CD4-positive, alpha-beta memory T cell (primary cell): ENCODE measurements at regions of chr22 and their contacts with region 1.

Region 1: GRCh38 chr22:36227386-36227785 is 11.9 kb downstream of the APOL2 start:
- DNase-seq: no peak
- H3K4me3 ChIP-seq: no peak overlapping the region
- H3K4me3 Mint-ChIP-seq: no peak overlapping the region
- H3K27ac ChIP-seq: no peak overlapping the region
- H3K27ac Mint-ChIP-seq: peak overlapping the region in 1 of 7 donors; percentile 42
- H3K4me1 ChIP-seq: no peaks in the 10 kb centered on the region
- H3K4me1 Mint-ChIP-seq: peaks cover 0 to 4% (median 3%) of the 10 kb centered on the region in 4 donors
- H3K27me3 ChIP-seq: no peaks in the 10 kb centered on the region
- H3K27me3 Mint-ChIP-seq: no peaks in the 10 kb centered on the region

Region 2: DNA sequence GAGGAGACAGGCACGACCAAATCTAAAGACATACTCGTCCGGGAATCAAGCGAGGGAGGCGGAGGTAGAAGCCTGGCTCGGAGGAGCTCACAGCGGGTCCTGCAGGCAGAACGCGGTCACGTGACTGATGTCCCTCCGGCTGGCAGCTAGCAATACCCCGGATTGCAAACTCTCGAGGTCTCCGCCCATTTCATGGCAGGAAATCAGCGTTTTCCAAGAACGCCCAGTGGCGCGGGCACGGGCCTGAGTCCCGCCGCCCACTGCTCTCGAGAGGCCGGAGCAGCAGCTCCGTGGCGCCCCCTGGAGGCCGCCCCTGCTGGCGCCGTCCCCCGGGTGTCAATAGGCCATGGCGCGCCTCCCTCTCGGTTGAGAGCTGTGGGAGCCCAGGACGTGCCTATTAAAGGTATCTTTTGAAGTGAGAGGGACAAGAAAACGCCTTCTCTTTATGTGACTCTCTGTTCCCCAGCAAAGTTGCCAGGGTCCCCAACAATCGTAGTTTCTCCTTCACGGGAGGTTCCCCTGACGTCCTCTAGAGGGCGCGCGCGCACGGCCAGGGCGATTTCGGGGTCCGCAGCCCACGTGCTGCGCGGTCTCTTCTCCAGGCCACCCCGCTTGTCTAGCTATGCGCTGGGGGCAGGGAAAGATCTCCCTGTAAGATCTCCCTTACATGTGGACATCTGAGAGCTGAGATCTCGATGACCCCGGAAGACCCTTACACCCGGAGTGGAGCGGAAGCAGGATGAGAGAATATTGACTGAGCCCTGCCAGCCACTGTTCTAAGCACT is 161.4 kb before region 1 on chr22:
- CTCF ChIA-PET with region 1: no interaction called
- POLR2A ChIA-PET with region 1: no interaction called
- intact Hi-C with region 1: no loop called
- DNase-seq: peak; percentile 55 to 64 (median 60)
- H3K4me3 ChIP-seq: peak overlapping the region; percentile 49 to 67
- H3K4me3 Mint-ChIP-seq: peak overlapping the region; percentile 82 to 91 (median 86)
- H3K27ac ChIP-seq: peak overlapping the region; percentile 15
- H3K27ac Mint-ChIP-seq: peak overlapping the region; percentile 42 to 91 (median 79)
- H3K4me1 ChIP-seq: peaks cover 11% of the 10 kb centered on the region
- H3K4me1 Mint-ChIP-seq: peaks cover 6 to 10% (median 9%) of the 10 kb centered on the region in 4 donors
- H3K27me3 ChIP-seq: no peaks in the 10 kb centered on the region
- H3K27me3 Mint-ChIP-seq: peaks cover 0 to 2% of the 10 kb centered on the region in 2 donors

Region 3: GRCh38 chr22:36215981-36216380 is 11.4 kb before region 1 on chr22:
- CTCF ChIA-PET with region 1: interaction called, 10 read pairs
- POLR2A ChIA-PET with region 1: no interaction called
- intact Hi-C with region 1: no loop called
- DNase-seq: no peak
- H3K4me3 ChIP-seq: no peak overlapping the region
- H3K4me3 Mint-ChIP-seq: no peak overlapping the region
- H3K27ac ChIP-seq: no peak overlapping the region
- H3K27ac Mint-ChIP-seq: no peak overlapping the region
- H3K4me1 ChIP-seq: peaks cover 2% of the 10 kb centered on the region
- H3K4me1 Mint-ChIP-seq: peaks cover 2 to 5% (median 3%) of the 10 kb centered on the region in 4 donors
- H3K27me3 ChIP-seq: no peaks in the 10 kb centered on the region
- H3K27me3 Mint-ChIP-seq: peaks cover 24 to 54% of the 10 kb centered on the region in 2 donors

Region 4: DNA sequence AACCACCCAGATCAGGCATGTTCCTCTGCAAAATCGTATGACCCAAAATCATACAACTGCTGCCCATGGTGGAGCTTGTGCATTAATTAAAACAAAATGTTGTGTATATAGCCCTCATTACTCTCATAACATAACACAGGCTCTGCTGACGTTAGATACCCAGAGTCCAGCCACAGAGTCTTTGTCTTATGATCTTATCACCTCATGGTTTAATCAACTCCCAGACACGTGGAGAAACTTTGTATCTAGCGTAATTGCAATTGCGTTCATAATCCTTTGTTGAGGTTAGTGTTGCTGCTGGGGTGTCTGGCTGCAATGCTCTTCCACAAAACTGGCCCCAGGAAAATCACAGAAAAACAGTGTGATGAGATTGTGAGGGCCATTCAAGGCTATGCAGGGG is 20.6 kb after region 1 on chr22:
- CTCF ChIA-PET with region 1: no interaction called
- POLR2A ChIA-PET with region 1: no interaction called
- intact Hi-C with region 1: no loop called
- DNase-seq: no peak
- H3K4me3 ChIP-seq: no peak overlapping the region
- H3K4me3 Mint-ChIP-seq: no peak overlapping the region
- H3K27ac ChIP-seq: no peak overlapping the region
- H3K27ac Mint-ChIP-seq: no peak overlapping the region
- H3K4me1 ChIP-seq: peaks cover 6% of the 10 kb centered on the region
- H3K4me1 Mint-ChIP-seq: peaks cover 7 to 18% (median 11%) of the 10 kb centered on the region in 4 donors
- H3K27me3 ChIP-seq: no peaks in the 10 kb centered on the region
- H3K27me3 Mint-ChIP-seq: no peaks in the 10 kb centered on the region

Region 5: GRCh38 chr22:36267896-36268485 is 40.6 kb after region 1 on chr22:
- CTCF ChIA-PET with region 1: no interaction called
- POLR2A ChIA-PET with region 1: no interaction called
- intact Hi-C with region 1: no loop called
- DNase-seq: no peak
- H3K4me3 ChIP-seq: no peak overlapping the region
- H3K4me3 Mint-ChIP-seq: no peak overlapping the region
- H3K27ac ChIP-seq: no peak overlapping the region
- H3K27ac Mint-ChIP-seq: peak overlapping the region in 1 of 7 donors; percentile 4
- H3K4me1 ChIP-seq: no peaks in the 10 kb centered on the region
- H3K4me1 Mint-ChIP-seq: peaks cover 0 to 3% (median 1%) of the 10 kb centered on the region in 4 donors
- H3K27me3 ChIP-seq: no peaks in the 10 kb centered on the region
- H3K27me3 Mint-ChIP-seq: no peaks in the 10 kb centered on the region

Region 6: GRCh38 chr22:36546092-36546804 is 318.9 kb after region 1 on chr22:
- CTCF ChIA-PET with region 1: no interaction called
- POLR2A ChIA-PET with region 1: no interaction called
- intact Hi-C with region 1: no loop called
- DNase-seq: peak in 2 of 5 donors; percentile 12
- H3K4me3 ChIP-seq: no peak overlapping the region
- H3K4me3 Mint-ChIP-seq: no peak overlapping the region
- H3K27ac ChIP-seq: no peak overlapping the region
- H3K27ac Mint-ChIP-seq: no peak overlapping the region
- H3K4me1 ChIP-seq: peaks cover 6% of the 10 kb centered on the region
- H3K4me1 Mint-ChIP-seq: peaks cover 1 to 7% (median 7%) of the 10 kb centered on the region in 4 donors
- H3K27me3 ChIP-seq: no peaks in the 10 kb centered on the region
- H3K27me3 Mint-ChIP-seq: peaks cover 12 to 18% of the 10 kb centered on the region in 2 donors